HCT116 (cell line): ENCODE measurements at regions of chr17 and their contacts with region 1.

Region 1: DNA sequence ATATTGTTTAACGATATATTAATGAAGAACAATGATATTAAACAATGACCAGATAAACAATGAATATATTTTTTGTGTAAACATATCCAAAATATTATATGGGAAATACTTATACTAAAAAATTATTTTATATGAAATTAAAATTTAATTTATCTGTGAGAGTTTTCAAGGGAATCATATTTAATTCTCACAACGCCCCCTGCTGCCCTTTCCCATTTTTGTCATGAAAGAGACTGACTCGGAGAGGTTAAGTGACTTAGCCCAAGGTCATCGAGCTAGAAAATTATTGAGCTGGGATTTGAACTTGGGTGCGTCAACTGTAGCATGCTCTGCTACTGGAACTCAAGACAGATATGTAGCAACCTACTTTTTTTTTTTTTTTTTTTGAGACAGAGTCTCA is 7.2 kb upstream of the MYCBPAP start:
- DNase-seq: peak; percentile 50
- ATAC-seq: peak; percentile 31; the same call in 1 of the 2 replicates
- H3K4me3 ChIP-seq: no peak overlapping the region
- H3K27ac ChIP-seq: no peak overlapping the region
- H3K4me1 ChIP-seq: peaks cover 11 to 19% of the 10 kb centered on the region in 2 experiments
- H3K27me3 ChIP-seq: no peaks in the 10 kb centered on the region
- CTCF ChIP-seq: peak; percentile 54 to 73 (median 72); a peak in 5 of 6 replicates
- POLR2A ChIP-seq: no peak
- RAD21 ChIP-seq: peak; percentile 68

Region 2: DNA sequence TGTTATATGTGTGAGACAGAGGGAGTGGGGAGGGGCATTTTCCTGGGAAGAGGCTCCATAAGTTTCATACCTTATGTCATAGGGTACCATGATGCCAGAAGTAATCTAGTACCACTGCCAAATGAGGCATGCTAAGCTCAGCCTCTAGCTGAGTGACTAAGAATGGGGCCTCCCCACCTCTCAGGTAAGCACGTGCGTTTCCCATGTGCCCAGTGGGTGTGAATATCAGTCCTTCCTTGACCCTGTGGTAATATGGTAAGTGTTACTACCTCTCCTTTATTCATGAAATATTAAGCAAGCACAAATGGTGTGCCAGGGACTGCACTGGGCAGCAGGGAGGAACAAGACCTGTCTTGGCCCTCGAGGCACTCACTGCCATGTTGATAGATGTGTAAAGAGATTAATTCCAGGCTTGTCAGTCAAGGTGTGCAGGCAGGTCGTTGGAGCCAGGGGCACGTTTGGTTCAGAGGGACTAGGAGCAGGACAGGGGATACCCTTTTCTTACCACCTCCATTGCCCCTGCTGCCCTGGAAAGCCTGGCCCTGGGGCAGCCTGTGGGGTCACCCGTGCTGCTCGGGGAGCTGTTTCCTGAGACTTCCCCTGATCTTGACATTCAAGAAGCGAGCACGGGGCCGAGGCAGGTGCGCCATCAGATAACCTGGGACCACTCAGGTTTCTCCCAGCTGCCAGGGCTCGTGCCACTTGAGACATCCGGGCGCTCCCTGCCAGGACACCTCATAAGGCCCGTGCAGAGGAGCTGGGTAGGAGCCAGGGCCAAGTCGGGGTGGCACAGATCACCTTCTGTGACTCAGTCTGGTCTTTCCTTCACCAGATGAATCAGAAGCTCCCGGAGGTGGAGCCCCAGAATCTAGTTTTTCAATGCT is 13.6 kb before region 1 on chr17:
- CTCF ChIA-PET with region 1: interaction called, 12 read pairs
- POLR2A ChIA-PET with region 1: interaction called, 3 read pairs
- RAD21 ChIA-PET with region 1: interaction called in 1 of 2 experiments, 4 read pairs
- intact Hi-C with region 1: no loop called
- DNase-seq: no peak
- ATAC-seq: peak; percentile 55
- H3K4me3 ChIP-seq: no peak overlapping the region
- H3K27ac ChIP-seq: 0 out of 2 replicates have a peak overlapping the region, but pooled peaks have one; percentile 1
- H3K4me1 ChIP-seq: peaks cover 11 to 25% of the 10 kb centered on the region in 2 experiments
- H3K27me3 ChIP-seq: no peaks in the 10 kb centered on the region
- CTCF ChIP-seq: no peak
- POLR2A ChIP-seq: no peak
- RAD21 ChIP-seq: no peak

Region 3: GRCh38 chr17:50514946-50515702 is 14.1 kb after region 1 on chr17:
- CTCF ChIA-PET with region 1: interaction called, 12 read pairs
- POLR2A ChIA-PET with region 1: interaction called, 3 read pairs
- RAD21 ChIA-PET with region 1: no interaction called
- intact Hi-C with region 1: no loop called
- DNase-seq: no peak
- ATAC-seq: no peak
- H3K4me3 ChIP-seq: no peak overlapping the region
- H3K27ac ChIP-seq: no peak overlapping the region
- H3K4me1 ChIP-seq: peaks cover 0 to 17% of the 10 kb centered on the region in 2 experiments; a peak in 2 of 4 replicates
- H3K27me3 ChIP-seq: no peaks in the 10 kb centered on the region
- CTCF ChIP-seq: no peak
- POLR2A ChIP-seq: no peak
- RAD21 ChIP-seq: no peak